Right ventricle myocardium superior (tissue), 1 donor: ENCODE measurements at regions of chr19 and their contacts with region 1.

Region 1: GRCh38 chr19:6056801-6057650 is 53.3 kb downstream of the RFX2 start:
- DNase-seq: peak; percentile 84
- ATAC-seq: peak; percentile 85

Region 2: GRCh38 chr19:6100284-6100915 is 43.4 kb after region 1 on chr19:
- intact Hi-C with region 1: no loop called
- DNase-seq: peak; percentile 68
- ATAC-seq: no peak

Region 3: GRCh38 chr19:6110360-6110977 is 53.4 kb after region 1 on chr19 and contains the start of gene RFX2:
- intact Hi-C with region 1: loop called (anchors 5 kb)
- DNase-seq: peak; percentile 99
- ATAC-seq: peak; percentile 97
- total RNA-seq, gene RFX2: 8.3 TPM

Region 4: GRCh38 chr19:6150289-6150688 is 93.3 kb after region 1 on chr19:
- intact Hi-C with region 1: no loop called
- DNase-seq: no peak
- ATAC-seq: no peak